T-cell (primary cell): ENCODE measurements at regions of chr12 and their contacts with region 1.

Region 1: DNA sequence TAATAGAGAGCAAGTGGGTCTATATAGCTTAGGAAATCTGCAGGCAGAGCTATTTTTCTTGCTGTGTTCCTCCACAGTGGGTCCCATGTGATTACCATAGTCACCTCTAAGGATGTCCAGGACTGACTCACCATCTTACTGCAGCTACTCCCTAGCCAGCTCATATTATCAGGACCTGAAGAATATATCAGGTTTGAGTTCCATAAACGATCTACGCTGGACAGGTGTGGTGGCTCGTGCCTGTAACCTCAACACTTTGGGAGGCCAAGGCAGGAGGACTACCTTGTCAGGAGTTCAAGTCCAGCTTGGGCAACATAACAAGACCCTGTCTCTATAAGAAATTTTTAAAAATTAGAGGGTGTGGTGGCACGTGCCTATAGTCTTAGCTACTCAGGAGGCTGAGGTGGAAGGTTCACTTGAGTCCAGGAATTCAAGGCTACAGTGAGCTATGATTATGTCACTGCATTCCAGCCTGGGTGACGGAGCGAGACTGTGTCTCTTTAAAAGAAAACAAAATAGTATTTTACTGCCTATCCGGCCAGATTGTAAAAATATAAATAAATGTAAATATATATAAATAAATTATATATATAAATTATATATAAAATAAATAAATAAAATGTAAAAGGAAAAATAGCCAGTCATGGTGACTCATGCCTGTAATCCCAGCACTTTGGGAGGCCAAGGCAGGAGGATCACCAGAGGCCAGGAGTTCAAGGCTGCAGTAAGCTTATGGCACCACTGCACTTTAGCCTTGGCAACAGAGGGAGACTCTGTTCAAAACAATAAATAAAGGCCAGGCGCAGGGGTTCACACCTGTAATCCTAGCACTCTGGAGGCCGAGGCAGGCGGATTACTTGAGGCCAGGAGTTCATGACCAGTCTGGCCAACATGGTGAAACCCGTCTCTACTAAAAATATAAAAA is 6.9 kb upstream of the SPRYD4 start:
- DNase-seq: no peak
- ATAC-seq: no peak
- H3K4me3 ChIP-seq: no peak overlapping the region
- H3K4me3 Mint-ChIP-seq: no peak overlapping the region
- H3K27ac ChIP-seq: no peak overlapping the region
- H3K27ac Mint-ChIP-seq: no peak overlapping the region
- H3K4me1 ChIP-seq: peaks cover 0 to 5% of the 10 kb centered on the region in 2 experiments
- H3K4me1 Mint-ChIP-seq: peaks cover 4 to 6% (median 4%) of the 10 kb centered on the region in 3 donors
- H3K27me3 ChIP-seq: no peaks in the 10 kb centered on the region
- H3K27me3 Mint-ChIP-seq: no peaks in the 10 kb centered on the region

Region 2: DNA sequence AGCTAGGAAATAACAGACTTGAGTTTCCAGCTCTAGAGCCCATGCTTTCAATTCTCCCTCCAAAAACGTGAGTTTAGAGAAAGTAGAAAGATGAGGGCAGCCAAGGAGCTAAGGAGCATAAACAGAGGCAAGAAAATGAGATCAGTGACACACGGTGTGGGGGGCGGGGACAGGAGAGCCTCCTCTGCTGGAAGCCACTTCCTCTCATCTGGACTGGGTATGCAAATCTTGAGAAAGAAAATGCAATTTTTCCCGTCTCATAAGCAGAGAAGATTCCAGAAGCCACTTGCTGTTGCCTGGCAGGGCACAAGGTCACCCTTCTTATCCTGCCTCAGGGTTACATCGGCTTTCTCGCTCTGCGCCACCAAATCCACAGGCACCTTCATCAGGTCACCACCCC is 818.8 kb before region 1 on chr12:
- CTCF ChIA-PET with region 1: no interaction called
- POLR2A ChIA-PET with region 1: no interaction called
- DNase-seq: peak in 6 of 35 experiments; percentile 7 to 24 (median 12)
- ATAC-seq: no peak
- H3K4me3 ChIP-seq: no peak overlapping the region
- H3K4me3 Mint-ChIP-seq: no peak overlapping the region
- H3K27ac ChIP-seq: no peak overlapping the region
- H3K27ac Mint-ChIP-seq: peak overlapping the region in 1 of 2 donors; percentile 56
- H3K4me1 ChIP-seq: peaks cover 0 to 20% of the 10 kb centered on the region in 2 experiments
- H3K4me1 Mint-ChIP-seq: peaks cover 22 to 30% (median 25%) of the 10 kb centered on the region in 3 donors
- H3K27me3 ChIP-seq: peaks cover 0 to 3% of the 10 kb centered on the region in 2 experiments
- H3K27me3 Mint-ChIP-seq: peaks cover 0 to 3% of the 10 kb centered on the region in 2 donors

Region 3: DNA sequence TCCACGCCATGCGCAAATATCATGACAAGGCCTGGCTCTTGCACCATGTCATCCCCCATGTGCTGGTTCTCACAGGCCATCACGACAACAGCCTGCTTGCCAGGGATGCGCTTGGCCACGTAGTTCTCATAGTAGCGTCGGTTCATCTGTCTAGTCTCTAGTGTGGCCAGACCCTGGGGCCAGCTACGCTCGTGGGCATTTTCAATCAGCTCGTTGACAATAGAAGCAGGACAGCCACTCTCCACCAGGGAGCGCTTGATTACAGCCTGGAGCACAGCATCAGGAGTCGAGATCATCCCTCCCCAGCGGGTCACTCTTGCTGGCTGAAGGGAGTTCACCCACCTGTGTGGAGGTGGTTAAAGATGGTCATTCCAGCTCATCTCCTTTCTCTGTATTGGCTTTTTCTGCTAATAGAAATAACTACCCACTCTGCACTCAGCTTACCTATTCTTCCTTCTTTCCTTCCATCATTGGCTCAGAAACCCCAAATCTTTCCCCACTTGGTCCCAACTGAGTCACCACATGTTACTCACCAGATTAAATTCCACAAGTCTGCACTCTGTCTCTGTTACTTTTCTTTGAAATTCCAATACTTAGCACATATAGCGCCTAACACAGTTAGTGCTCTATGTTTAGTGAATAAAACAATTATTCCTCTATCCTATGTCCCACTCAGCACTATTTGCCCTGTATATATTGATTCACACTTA is 254.9 kb before region 1 on chr12:
- CTCF ChIA-PET with region 1: interaction called, 4 to 11 read pairs
- POLR2A ChIA-PET with region 1: no interaction called
- DNase-seq: peak in 19 of 35 experiments; percentile 16 to 52 (median 26)
- ATAC-seq: peak; percentile 48 to 72 (median 63)
- H3K4me3 ChIP-seq: no peak overlapping the region
- H3K4me3 Mint-ChIP-seq: no peak overlapping the region
- H3K27ac ChIP-seq: no peak overlapping the region
- H3K27ac Mint-ChIP-seq: peak overlapping the region; percentile 22 to 45
- H3K4me1 ChIP-seq: no peaks in the 10 kb centered on the region
- H3K4me1 Mint-ChIP-seq: peaks cover 0 to 7% (median 1%) of the 10 kb centered on the region in 3 donors
- H3K27me3 ChIP-seq: no peaks in the 10 kb centered on the region
- H3K27me3 Mint-ChIP-seq: no peaks in the 10 kb centered on the region

Region 4: GRCh38 chr12:57046947-57047890 is 585.7 kb after region 1 on chr12:
- CTCF ChIA-PET with region 1: interaction called in 1 of 2 experiments, 16 read pairs
- POLR2A ChIA-PET with region 1: no interaction called
- DNase-seq: peak in 19 of 35 experiments; percentile 7 to 49 (median 24)
- ATAC-seq: peak; percentile 37 to 83 (median 68)
- H3K4me3 ChIP-seq: peak overlapping the region in 1 of 2 donors; percentile 5
- H3K4me3 Mint-ChIP-seq: peak overlapping the region in 2 of 3 donors; percentile 49 to 74
- H3K27ac ChIP-seq: no peak overlapping the region
- H3K27ac Mint-ChIP-seq: peak overlapping the region; percentile 56 to 61
- H3K4me1 ChIP-seq: peaks cover 12 to 24% of the 10 kb centered on the region in 2 experiments
- H3K4me1 Mint-ChIP-seq: peaks cover 20 to 43% (median 26%) of the 10 kb centered on the region in 3 donors
- H3K27me3 ChIP-seq: peaks cover 0 to 9% of the 10 kb centered on the region in 2 experiments
- H3K27me3 Mint-ChIP-seq: peaks cover 0 to 5% of the 10 kb centered on the region in 2 donors